Activated CD4-positive, alpha-beta T cell treated with anti-CD3 and anti-CD28 coated beads, Interleukin-2, amount 10 ng/mL, durations not matched to agents 24 days and 14 days (primary cell): ENCODE measurements at regions of chr10 and their contacts with region 1.

Region 1: GRCh38 chr10:14648005-14648765 is 126.5 kb downstream of the FAM107B start:
- DNase-seq: peak; percentile 92
- H3K4me3 Mint-ChIP-seq: peak overlapping the region; percentile 70
- H3K27ac Mint-ChIP-seq: peak overlapping the region; percentile 97
- H3K4me1 Mint-ChIP-seq: peaks cover 56% of the 10 kb centered on the region
- H3K27me3 Mint-ChIP-seq: no peaks in the 10 kb centered on the region

Region 2: GRCh38 chr10:14009371-14010100 is 638.6 kb before region 1 on chr10:
- intact Hi-C with region 1: loop called (anchors 2 kb)
- DNase-seq: peak; percentile 85
- H3K4me3 Mint-ChIP-seq: peak overlapping the region; percentile 82
- H3K27ac Mint-ChIP-seq: peak overlapping the region; percentile 82
- H3K4me1 Mint-ChIP-seq: peaks cover 28% of the 10 kb centered on the region
- H3K27me3 Mint-ChIP-seq: peaks cover 22% of the 10 kb centered on the region

Region 3: DNA sequence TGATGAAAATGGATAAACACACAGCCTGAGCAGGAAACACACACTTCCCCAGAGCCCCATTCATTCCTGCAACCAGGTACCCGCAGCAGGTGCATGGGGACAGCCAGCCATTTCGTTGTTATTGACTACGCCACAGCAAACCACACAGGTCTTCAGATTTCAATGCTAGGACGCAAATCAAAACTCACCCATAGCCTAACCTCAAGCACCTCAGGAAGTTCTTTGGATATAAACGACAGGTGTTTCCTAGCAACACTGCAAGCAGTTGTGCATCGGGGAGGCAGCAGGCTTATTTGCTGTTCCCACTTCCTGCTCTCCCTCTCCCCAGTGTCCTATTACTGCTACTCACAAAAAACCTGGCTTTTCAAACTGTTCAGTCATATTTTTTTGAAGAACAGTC is 141.0 kb before region 1 on chr10:
- intact Hi-C with region 1: loop called (anchors 1 kb)
- DNase-seq: peak; percentile 85
- H3K4me3 Mint-ChIP-seq: peak overlapping the region; percentile 29
- H3K27ac Mint-ChIP-seq: peak overlapping the region; percentile 72
- H3K4me1 Mint-ChIP-seq: peaks cover 21% of the 10 kb centered on the region
- H3K27me3 Mint-ChIP-seq: no peaks in the 10 kb centered on the region

Region 4: GRCh38 chr10:14583252-14583651 is 64.9 kb before region 1 on chr10:
- intact Hi-C with region 1: loop called (anchors 1 kb)
- DNase-seq: peak; percentile 93
- H3K4me3 Mint-ChIP-seq: peak overlapping the region; percentile 80
- H3K27ac Mint-ChIP-seq: peak overlapping the region; percentile 92
- H3K4me1 Mint-ChIP-seq: peaks cover 68% of the 10 kb centered on the region
- H3K27me3 Mint-ChIP-seq: no peaks in the 10 kb centered on the region

Region 5: DNA sequence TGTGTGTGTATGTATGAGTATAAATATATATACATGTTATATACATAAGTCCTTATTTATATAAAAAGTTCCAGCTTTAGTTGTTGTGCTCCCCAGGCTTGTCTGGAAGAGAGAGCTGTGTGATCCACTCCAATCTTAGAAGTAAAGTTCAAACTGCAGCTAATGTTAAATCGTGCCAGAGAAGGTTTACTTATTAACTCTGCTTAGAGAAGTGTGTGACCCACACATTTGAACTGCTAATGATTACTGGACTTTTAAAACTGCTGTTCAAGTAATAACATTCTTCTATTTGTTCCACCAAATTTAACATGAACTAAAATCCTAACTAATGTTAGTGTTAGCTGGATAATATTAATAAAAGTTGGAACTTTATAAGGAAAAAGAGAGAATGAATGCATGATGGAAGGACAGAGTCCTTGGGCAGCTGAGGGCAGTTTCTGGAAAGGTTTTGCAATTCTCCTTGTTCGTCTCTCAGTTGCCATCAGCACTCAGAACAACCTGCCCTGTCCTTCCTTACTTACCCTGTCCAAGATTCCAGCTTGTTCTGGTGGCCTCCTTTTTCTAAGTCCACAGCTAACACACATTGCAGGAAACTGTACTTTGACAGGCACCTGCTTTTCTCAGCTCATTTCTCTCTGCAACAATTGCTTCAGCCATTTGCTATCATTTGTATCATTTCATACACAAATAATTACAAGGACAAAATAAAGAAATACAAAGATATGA is 36.1 kb before region 1 on chr10:
- intact Hi-C with region 1: no loop called
- DNase-seq: no peak
- H3K4me3 Mint-ChIP-seq: no peak overlapping the region
- H3K27ac Mint-ChIP-seq: no peak overlapping the region
- H3K4me1 Mint-ChIP-seq: peaks cover 38% of the 10 kb centered on the region
- H3K27me3 Mint-ChIP-seq: no peaks in the 10 kb centered on the region

Region 6: GRCh38 chr10:14659626-14660196 is 11.5 kb after region 1 on chr10:
- intact Hi-C with region 1: loop called (anchors 1 kb)
- DNase-seq: peak; percentile 89
- H3K4me3 Mint-ChIP-seq: peak overlapping the region; percentile 64
- H3K27ac Mint-ChIP-seq: peak overlapping the region; percentile 92
- H3K4me1 Mint-ChIP-seq: peaks cover 60% of the 10 kb centered on the region
- H3K27me3 Mint-ChIP-seq: no peaks in the 10 kb centered on the region

Region 7: DNA sequence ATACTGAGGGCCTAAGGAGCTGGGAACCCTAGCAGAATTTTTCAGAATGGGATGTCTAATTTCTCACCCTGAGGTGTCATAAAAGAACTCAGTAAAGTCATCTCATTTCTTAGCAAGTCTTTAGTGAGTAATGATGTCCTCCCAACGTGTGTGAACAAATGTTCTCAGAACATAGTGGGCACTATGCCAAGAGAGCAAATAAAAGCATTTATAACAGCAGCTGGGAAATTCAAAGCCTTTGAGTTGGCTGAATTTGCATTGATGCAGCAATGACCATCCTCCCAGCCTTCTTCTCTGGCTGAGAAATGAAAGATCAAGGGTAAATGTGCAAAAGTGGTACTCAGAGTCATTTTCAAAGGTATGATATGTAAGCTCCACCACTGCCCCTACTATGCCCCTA is 17.1 kb after region 1 on chr10:
- intact Hi-C with region 1: loop called (anchors 2 kb)
- DNase-seq: no peak
- H3K4me3 Mint-ChIP-seq: no peak overlapping the region
- H3K27ac Mint-ChIP-seq: peak overlapping the region; percentile 56
- H3K4me1 Mint-ChIP-seq: peaks cover 32% of the 10 kb centered on the region
- H3K27me3 Mint-ChIP-seq: no peaks in the 10 kb centered on the region

Region 8: DNA sequence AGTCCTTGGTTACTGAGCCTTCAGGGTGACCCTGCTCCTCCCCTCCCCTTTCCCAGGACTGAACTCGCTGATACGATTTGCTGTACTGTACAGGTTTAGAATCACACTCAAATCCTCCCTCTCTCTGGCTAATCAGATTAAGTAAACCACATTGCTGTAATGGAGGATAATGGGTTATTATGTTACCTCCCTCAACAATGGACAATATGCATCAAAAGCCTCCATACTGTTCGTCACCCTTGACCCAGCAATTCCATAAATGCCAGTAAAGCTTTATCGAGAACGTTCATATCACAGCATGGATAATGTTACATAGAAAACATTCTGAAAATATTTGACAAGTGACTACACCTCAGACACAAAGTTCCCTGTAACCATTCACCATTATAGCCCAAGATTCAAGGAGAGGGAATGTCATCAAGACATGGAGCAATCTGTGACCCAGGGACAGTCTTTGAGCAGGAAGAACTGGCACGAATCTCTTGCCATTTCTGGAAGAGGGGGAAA is 64.9 kb after region 1 on chr10:
- intact Hi-C with region 1: no loop called
- DNase-seq: no peak
- H3K4me3 Mint-ChIP-seq: no peak overlapping the region
- H3K27ac Mint-ChIP-seq: no peak overlapping the region
- H3K4me1 Mint-ChIP-seq: peaks cover 4% of the 10 kb centered on the region
- H3K27me3 Mint-ChIP-seq: no peaks in the 10 kb centered on the region

Region 9: GRCh38 chr10:14770927-14771326 is 122.7 kb after region 1 on chr10:
- intact Hi-C with region 1: no loop called
- DNase-seq: no peak
- H3K4me3 Mint-ChIP-seq: no peak overlapping the region
- H3K27ac Mint-ChIP-seq: no peak overlapping the region
- H3K4me1 Mint-ChIP-seq: peaks cover 2% of the 10 kb centered on the region
- H3K27me3 Mint-ChIP-seq: peaks cover 17% of the 10 kb centered on the region

Region 10: DNA sequence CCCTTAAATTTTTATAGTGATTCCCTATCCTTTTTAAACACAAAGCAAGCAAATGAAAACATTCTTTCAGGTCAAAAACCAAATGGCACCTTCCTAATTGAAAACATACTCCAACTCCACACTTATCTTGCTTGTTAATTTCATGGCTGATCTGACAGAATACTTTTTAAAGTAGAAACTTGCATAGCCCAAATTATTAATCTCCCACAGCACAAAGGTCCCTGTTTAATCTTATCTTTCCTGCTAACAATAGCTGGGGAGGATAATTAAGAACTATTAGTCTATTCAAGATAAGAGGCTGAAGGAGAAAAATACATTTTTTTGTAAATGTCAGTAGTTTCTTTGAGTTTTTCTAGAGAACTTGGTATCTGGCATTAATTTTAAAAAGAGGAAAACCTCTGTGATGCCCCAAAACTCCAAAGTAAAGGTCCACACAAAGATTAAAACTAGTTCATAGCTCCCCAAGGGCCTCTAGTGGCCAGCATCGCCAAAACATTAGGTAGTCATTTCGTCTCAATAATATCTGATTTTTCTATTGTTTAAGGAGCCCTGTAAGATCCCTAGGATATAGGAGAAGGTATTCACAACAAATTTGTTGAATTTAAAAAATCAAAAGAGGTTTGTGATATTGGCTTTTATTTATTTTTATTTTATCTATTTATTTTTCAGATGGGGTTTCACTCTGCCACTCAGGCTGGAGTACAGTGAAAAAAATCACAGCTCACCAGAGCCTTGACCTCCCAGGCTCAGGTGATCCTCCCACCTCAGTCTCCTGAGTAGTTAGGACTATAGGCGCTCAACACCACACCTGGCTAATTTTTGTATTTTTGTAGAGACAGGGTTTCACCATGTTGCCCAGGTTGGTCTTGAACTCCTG is 174.9 kb after region 1 on chr10:
- intact Hi-C with region 1: loop called (anchors 5 kb)
- DNase-seq: peak; percentile 79
- H3K4me3 Mint-ChIP-seq: no peak overlapping the region
- H3K27ac Mint-ChIP-seq: no peak overlapping the region
- H3K4me1 Mint-ChIP-seq: peaks cover 12% of the 10 kb centered on the region
- H3K27me3 Mint-ChIP-seq: peaks cover 12% of the 10 kb centered on the region